Heart right ventricle (tissue), 16 donors: ENCODE measurements at regions of chr6 and their contacts with region 1.

Region 1: GRCh38 chr6:51139950-51140385 is 321.3 kb downstream of the TFAP2B start:
- DNase-seq: no peak
- ATAC-seq: no peak
- H3K4me3 ChIP-seq: no peak overlapping the region
- H3K27ac ChIP-seq: no peak overlapping the region
- H3K4me1 ChIP-seq: no peaks in the 10 kb centered on the region
- H3K27me3 ChIP-seq: no peaks in the 10 kb centered on the region
- CTCF ChIP-seq: no peak

Region 2: DNA sequence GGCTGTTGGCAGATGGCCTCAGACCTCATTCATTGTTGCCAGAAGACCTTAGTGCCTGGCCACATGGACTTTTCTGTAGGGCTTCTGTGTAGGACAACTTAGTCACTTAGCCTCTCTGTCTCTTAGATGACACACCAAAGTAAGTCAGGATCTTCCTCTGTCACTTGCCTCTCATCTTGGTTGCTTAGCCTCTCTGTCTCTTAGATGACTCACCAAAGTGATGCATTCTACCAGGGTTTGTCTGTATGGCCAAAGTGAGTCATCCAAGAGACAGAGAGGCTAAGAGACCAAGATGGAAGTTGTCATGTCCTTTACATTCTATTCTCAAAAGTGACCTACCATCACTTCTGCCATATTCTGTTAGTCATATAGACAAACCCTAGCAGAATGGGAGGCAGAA is 834.3 kb before region 1 on chr6:
- intact Hi-C with region 1: loop called in 1 of 10 experiments (anchors 5 kb)
- DNase-seq: no peak
- ATAC-seq: no peak
- H3K4me3 ChIP-seq: no peak overlapping the region
- H3K27ac ChIP-seq: no peak overlapping the region
- H3K4me1 ChIP-seq: no peaks in the 10 kb centered on the region
- H3K27me3 ChIP-seq: no peaks in the 10 kb centered on the region
- CTCF ChIP-seq: no peak

Region 3: GRCh38 chr6:51398064-51398705 is 258.2 kb after region 1 on chr6:
- intact Hi-C with region 1: no loop called
- DNase-seq: no peak
- ATAC-seq: no peak
- H3K4me3 ChIP-seq: no peak overlapping the region
- H3K27ac ChIP-seq: no peak overlapping the region
- H3K4me1 ChIP-seq: no peaks in the 10 kb centered on the region
- H3K27me3 ChIP-seq: no peaks in the 10 kb centered on the region
- CTCF ChIP-seq: no peak